ENCODE measurements at regions of chr2 and their contacts with region 1.

Region 1: DNA sequence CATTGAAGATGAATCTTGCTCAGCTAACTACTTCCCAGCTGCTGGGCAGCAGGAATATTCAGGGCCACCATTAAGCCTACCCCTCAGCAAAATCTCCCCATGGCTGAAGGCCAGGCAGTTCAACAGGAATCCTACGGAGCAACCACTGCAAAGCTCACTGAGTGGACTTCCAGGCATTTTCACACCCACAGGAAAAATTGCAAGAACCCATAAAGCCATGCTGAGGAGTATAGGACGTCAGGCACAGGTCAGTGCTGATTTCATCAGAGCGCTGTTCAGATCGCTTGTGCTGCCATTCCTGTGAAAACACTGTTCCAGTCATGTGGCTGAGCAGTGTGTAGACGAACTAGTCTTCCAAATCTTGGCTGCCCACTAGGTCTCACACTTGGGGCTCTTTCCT is 134.8 kb upstream of the TACR1 start:
- DNase-seq: no peak
- H3K4me3 ChIP-seq: no peak overlapping the region
- H3K27ac ChIP-seq: no peak overlapping the region
- H3K4me1 ChIP-seq: no peaks in the 10 kb centered on the region
- H3K27me3 ChIP-seq: peaks cover 2% of the 10 kb centered on the region
- CTCF ChIP-seq: no peak

Region 2: DNA sequence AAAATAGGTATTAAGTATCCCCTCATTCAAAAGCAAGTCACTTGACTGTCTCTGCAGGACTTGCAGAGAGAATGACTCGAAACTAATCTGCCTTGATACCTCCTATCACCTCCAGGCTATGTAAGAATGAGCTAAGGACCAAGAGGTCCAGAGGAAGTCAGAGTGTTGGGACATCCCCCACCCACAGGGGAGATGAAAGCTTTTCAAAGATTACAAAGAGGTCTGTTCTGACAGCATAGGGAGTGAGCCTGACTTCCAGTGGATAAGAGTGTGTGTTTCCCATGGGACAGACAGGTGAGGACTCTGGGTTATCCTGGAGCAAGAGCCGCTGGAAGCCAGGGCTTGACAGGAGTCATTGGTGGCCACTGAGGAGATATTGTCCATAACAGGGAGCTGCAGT is 49.8 kb before region 1 on chr2:
- CTCF ChIA-PET with region 1: no interaction called
- dilution Hi-C with region 1: no loop called
- in situ Hi-C with region 1: no loop called
- intact Hi-C with region 1: no loop called
- DNase-seq: no peak
- H3K4me3 ChIP-seq: no peak overlapping the region
- H3K27ac ChIP-seq: no peak overlapping the region
- H3K4me1 ChIP-seq: no peaks in the 10 kb centered on the region
- H3K27me3 ChIP-seq: no peaks in the 10 kb centered on the region
- CTCF ChIP-seq: no peak

Region 3: DNA sequence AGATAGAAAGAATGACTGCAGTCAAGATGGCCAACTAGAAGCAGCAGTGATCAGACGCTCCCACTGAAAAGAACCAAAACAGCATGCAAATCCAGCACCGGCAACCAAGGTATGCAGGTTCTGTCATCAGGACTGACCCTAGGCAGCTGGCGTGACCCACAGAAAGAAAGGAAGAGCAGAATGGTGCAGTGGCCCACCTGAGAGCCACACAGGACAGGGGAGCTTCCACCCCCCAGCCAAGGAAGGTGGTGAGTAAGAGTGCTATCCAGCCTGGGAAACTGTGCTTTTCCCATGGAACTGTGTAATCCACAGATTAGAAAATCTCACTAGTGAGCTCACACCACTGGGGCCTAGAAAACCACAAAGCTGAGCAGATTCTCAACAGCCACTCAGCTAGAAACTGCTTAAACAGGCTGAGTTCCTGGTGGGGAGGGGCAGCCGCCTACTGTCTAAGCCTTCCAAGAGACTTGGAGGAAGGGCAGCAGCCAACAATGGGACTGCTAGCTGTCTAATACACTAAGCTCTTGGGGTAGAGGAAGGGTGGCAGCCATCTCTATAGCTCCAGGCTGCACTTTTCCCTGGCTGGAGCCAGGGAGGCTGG is 98.8 kb after region 1 on chr2:
- CTCF ChIA-PET with region 1: interaction called, 19 read pairs
- dilution Hi-C with region 1: no loop called
- in situ Hi-C with region 1: no loop called
- intact Hi-C with region 1: no loop called
- DNase-seq: no peak
- H3K4me3 ChIP-seq: no peak overlapping the region
- H3K27ac ChIP-seq: no peak overlapping the region
- H3K4me1 ChIP-seq: peaks cover 4% of the 10 kb centered on the region
- H3K27me3 ChIP-seq: no peaks in the 10 kb centered on the region
- CTCF ChIP-seq: no peak

Region 4: DNA sequence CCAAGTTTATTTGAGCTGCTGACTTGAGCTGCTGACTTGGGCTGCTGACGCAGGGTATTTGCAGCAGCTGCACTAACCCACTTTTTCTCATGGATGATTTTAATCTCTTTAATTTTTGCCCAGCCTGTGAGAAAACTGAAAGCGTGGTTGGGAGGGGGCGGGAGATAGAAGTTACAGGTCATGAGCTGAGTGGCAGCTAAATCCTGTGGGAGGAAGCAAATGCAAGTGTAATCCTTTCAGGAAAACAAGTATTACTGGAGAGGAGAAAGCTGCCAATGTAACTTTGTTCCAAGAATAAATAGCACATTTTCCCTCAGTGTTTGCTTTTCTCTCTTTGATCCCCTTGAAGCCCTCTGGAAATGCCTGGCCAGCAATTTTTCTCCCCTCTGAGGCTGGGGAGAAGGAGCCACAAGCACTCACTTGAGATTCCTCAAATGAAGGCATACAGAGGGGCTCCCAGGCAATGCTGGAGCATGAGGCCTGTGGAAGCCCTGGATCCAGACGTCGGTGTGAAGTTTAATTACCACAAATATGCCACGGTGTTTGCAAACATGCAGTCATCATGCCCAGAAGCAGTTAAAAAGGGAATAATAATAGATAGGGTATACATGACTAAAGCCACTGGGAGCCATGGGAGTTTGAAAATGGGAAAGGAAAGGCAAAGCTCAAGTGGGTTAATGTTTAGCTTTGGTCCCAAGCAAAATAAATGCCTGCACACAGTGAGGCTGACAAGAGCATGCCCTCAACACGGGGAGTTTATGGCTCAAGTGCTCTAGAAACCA is 237.0 kb after region 1 on chr2:
- CTCF ChIA-PET with region 1: no interaction called
- dilution Hi-C with region 1: no loop called
- in situ Hi-C with region 1: no loop called
- intact Hi-C with region 1: no loop called
- DNase-seq: no peak
- H3K4me3 ChIP-seq: no peak overlapping the region
- H3K27ac ChIP-seq: no peak overlapping the region
- H3K4me1 ChIP-seq: peaks cover 49% of the 10 kb centered on the region
- H3K27me3 ChIP-seq: no peaks in the 10 kb centered on the region
- CTCF ChIP-seq: no peak

Measured in mammary epithelial cell (primary cell).